ENCODE measurements at regions of chr7 and their contacts with region 1.

Region 1: GRCh38 chr7:104923010-104923421 is 91.0 kb upstream of the KMT2E start:
- DNase-seq: peak; percentile 90
- H3K4me3 Mint-ChIP-seq: no peak overlapping the region
- H3K27ac Mint-ChIP-seq: no peak overlapping the region
- H3K4me1 Mint-ChIP-seq: no peaks in the 10 kb centered on the region
- H3K27me3 Mint-ChIP-seq: peaks cover 5% of the 10 kb centered on the region
- CTCF ChIP-seq: peak; percentile 89

Region 2: DNA sequence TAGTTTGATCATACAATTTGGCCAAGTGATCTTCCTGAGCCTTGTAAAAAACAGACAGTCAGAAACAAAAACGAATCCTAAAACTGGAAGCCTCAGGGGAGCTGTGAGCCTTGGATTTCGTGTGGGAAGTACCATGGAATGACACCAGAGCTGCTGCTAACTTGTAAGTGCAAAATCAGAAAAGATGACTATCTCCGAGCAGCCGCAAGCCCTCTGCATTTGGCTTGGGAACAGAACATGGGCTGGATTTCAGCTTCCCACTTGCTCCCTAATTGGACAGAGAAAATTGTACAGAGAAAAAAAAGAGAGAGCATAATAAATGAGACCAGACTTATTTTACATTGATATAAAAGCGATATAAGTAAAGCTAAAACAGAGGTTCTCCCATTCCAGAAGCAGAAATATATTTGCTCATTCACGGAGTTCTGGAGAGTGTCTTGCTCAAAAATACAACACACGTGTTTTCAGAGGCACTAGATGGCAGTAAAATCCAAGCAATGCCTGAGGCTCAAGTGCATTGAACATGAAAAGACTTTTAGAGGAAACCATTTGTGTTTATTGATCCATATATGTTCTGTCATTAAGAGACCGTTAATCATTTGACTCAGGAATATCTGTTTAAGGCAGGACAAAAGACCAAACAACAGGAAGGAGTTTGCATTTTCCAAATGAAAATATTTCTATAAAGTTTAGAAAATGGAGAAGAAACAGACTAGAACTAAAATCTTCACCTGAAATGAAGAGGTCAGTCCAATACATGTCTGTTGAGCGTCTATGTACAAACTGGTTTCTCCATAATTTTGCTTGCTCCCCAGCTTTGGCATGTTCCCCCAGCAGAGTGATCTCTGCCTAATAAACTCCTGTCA is 1398.7 kb before region 1 on chr7:
- CTCF ChIA-PET with region 1: interaction called, 4 read pairs
- POLR2A ChIA-PET with region 1: no interaction called
- intact Hi-C with region 1: loop called (anchors 5 kb)
- DNase-seq: peak; percentile 30
- H3K4me3 Mint-ChIP-seq: no peak overlapping the region
- H3K27ac Mint-ChIP-seq: no peak overlapping the region
- H3K4me1 Mint-ChIP-seq: peaks cover 4% of the 10 kb centered on the region
- H3K27me3 Mint-ChIP-seq: peaks cover 47% of the 10 kb centered on the region
- CTCF ChIP-seq: peak; percentile 30

Region 3: DNA sequence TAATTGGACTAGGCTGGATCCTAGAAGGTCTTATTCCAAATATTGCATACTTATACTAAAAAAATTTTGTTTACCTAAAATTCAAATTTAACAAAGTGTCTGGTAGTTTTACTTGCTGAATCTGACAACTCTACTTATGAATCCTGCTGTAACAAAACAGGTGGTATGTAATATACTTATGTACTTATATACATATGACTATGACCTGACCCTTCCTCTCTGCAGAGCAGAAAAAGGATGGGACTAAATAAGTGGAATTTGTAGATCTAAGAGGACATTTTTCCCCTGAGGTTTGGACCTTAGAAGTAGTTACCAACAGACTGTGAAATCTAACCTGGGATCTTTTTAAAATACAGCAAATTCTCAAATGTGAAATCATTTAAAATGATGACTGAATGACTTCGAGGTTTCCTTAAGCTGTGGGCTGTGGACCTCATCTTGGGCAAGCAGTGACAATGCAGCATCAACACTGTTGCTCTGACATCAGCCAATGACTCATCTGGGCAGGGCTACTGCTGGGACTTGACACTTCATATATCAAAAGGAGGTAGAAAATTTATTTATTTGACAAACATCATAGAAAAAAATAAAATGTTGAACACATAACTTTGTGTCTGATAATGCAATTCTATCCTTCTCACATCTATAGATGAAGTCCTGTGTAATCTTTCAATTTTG is 1007.2 kb before region 1 on chr7:
- CTCF ChIA-PET with region 1: no interaction called
- POLR2A ChIA-PET with region 1: no interaction called
- intact Hi-C with region 1: no loop called
- DNase-seq: peak; percentile 35
- H3K4me3 Mint-ChIP-seq: no peak overlapping the region
- H3K27ac Mint-ChIP-seq: no peak overlapping the region
- H3K4me1 Mint-ChIP-seq: no peaks in the 10 kb centered on the region
- H3K27me3 Mint-ChIP-seq: peaks cover 63% of the 10 kb centered on the region
- CTCF ChIP-seq: no peak

Region 4: DNA sequence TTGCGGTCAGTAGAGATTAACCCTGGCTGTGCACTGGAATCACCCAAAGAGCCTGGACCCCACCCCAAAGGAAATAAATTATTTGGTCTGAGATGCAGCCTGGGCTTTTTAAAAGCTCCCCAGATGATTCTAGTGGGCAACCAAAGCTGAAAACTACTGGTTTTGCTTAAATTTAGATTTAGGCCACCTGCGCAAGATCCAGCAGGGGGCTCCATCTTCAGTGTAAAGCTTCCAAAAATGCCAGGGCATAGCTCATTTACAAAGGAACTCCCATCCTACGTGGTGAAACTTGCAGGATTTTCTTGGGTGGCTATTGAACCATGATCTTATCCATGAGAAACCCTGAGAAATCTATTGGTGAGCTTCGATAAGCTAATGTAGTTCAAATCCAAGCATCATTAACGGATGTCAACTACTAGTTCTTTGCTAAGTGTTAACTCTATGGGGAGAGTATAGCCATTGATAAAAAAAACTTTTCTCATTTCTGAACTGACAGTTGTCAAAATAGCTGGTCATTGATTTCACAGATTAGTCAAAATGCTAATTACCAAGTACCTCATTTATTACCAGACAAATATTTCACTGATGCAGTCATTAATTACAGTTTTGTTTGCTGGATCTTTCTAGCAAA is 279.3 kb before region 1 on chr7:
- CTCF ChIA-PET with region 1: interaction called, 4 read pairs
- POLR2A ChIA-PET with region 1: no interaction called
- intact Hi-C with region 1: loop called (anchors 1 kb)
- DNase-seq: peak; percentile 38
- H3K4me3 Mint-ChIP-seq: no peak overlapping the region
- H3K27ac Mint-ChIP-seq: no peak overlapping the region
- H3K4me1 Mint-ChIP-seq: no peaks in the 10 kb centered on the region
- H3K27me3 Mint-ChIP-seq: peaks cover 82% of the 10 kb centered on the region
- CTCF ChIP-seq: peak; percentile 35

Region 5: GRCh38 chr7:104895522-104896236 is 27.3 kb before region 1 on chr7:
- CTCF ChIA-PET with region 1: interaction called, 51 read pairs
- POLR2A ChIA-PET with region 1: no interaction called
- intact Hi-C with region 1: no loop called
- DNase-seq: no peak
- H3K4me3 Mint-ChIP-seq: no peak overlapping the region
- H3K27ac Mint-ChIP-seq: no peak overlapping the region
- H3K4me1 Mint-ChIP-seq: no peaks in the 10 kb centered on the region
- H3K27me3 Mint-ChIP-seq: peaks cover 8% of the 10 kb centered on the region
- CTCF ChIP-seq: no peak

Region 6: GRCh38 chr7:105046414-105046813 is 123.4 kb after region 1 on chr7:
- CTCF ChIA-PET with region 1: interaction called, 5 read pairs
- POLR2A ChIA-PET with region 1: no interaction called
- intact Hi-C with region 1: loop called (anchors 2 kb)
- DNase-seq: no peak
- H3K4me3 Mint-ChIP-seq: no peak overlapping the region
- H3K27ac Mint-ChIP-seq: peak overlapping the region; percentile 37
- H3K4me1 Mint-ChIP-seq: peaks cover 13% of the 10 kb centered on the region
- H3K27me3 Mint-ChIP-seq: no peaks in the 10 kb centered on the region
- CTCF ChIP-seq: no peak

Region 7: GRCh38 chr7:105429746-105430612 is 507.0 kb after region 1 on chr7:
- CTCF ChIA-PET with region 1: interaction called, 4 read pairs
- POLR2A ChIA-PET with region 1: interaction called, 3 read pairs
- intact Hi-C with region 1: loop called (anchors 1 kb)
- DNase-seq: peak; percentile 68
- H3K4me3 Mint-ChIP-seq: no peak overlapping the region
- H3K27ac Mint-ChIP-seq: no peak overlapping the region
- H3K4me1 Mint-ChIP-seq: no peaks in the 10 kb centered on the region
- H3K27me3 Mint-ChIP-seq: no peaks in the 10 kb centered on the region
- CTCF ChIP-seq: peak; percentile 57